Activated T-helper 1 cell treated with anti-CD3 and anti-CD28 coated beads, Interleukin-12 subunit alpha, Interleukin-12 subunit beta, Interleukin-2, Interleukin-4 antibody, amounts not matched to agents 30 ng/mL and 10 ng/mL and 1 ng/mL, durations not matched to agents 14 hours and 24 hours and 36 hours (primary cell): ENCODE measurements at regions of chr1 and their contacts with region 1.

Region 1: GRCh38 chr1:236603991-236604904 is at the start of gene HEATR1:
- DNase-seq: peak; percentile 85
- H3K4me3 Mint-ChIP-seq: peak within 1 kb of the TSS; percentile 98
- H3K27ac Mint-ChIP-seq: peak within 1 kb of the TSS; percentile 90
- H3K4me1 Mint-ChIP-seq: peaks cover 37% of the 10 kb centered on the region
- H3K27me3 Mint-ChIP-seq: peaks cover 8% of the 10 kb centered on the region
- total RNA-seq, gene HEATR1: 83.6 and 85.2 TPM in 2 replicates

Region 2: GRCh38 chr1:236103646-236104218 is 500.5 kb before region 1 on chr1:
- intact Hi-C with region 1: loop called (anchors 1 kb)
- DNase-seq: peak; percentile 38
- H3K4me3 Mint-ChIP-seq: no peak overlapping the region
- H3K27ac Mint-ChIP-seq: no peak overlapping the region
- H3K4me1 Mint-ChIP-seq: peaks cover 6% of the 10 kb centered on the region
- H3K27me3 Mint-ChIP-seq: peaks cover 3% of the 10 kb centered on the region

Region 3: DNA sequence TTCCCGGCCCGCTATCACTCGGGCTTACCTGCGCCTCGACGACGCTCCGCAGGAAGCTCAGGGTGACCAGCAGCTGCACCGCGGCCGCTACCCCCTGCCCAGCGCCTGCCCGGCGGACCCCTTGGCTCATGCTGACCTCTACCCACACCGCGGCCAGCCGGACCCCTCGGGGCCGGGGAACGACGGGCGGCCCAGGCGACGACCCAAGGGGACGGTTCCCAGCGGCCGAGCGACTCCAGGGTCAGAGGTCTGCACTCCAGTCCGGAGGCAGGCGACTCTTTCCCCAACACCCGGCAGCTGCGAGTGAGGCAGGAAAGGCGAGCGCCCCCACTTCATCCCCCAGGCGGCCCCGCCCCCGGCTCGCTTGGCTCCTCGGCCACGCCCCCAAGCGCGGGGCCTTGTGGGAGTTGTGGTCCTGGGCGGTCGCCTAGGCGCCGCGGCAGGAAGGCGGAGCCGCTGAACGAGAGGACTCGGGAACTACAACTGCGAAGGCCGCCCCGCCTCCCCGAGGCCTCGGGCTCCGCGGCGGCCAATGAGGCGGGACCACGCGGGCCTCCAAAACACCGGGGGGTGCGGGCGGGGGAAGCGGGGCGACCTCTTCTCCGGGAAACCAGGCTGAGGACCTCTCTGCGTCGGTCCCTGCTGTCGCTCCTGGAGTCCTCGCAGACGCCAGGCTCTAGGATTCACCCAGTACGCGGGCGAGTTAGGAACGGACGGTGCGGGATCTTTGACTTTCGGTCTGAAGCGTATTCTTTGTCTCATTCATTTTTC is 322.4 kb before region 1 on chr1 and contains the start of gene ERO1B:
- intact Hi-C with region 1: loop called (anchors 1 kb)
- DNase-seq: peak; percentile 98
- H3K4me3 Mint-ChIP-seq: peak within 1 kb of the TSS; percentile 90
- H3K27ac Mint-ChIP-seq: peak within 1 kb of the TSS; percentile 80
- H3K4me1 Mint-ChIP-seq: peaks cover 45% of the 10 kb centered on the region
- H3K27me3 Mint-ChIP-seq: peaks cover 12% of the 10 kb centered on the region
- total RNA-seq, gene ERO1B: 2.1 and 2.4 TPM in 2 replicates

Region 4: DNA sequence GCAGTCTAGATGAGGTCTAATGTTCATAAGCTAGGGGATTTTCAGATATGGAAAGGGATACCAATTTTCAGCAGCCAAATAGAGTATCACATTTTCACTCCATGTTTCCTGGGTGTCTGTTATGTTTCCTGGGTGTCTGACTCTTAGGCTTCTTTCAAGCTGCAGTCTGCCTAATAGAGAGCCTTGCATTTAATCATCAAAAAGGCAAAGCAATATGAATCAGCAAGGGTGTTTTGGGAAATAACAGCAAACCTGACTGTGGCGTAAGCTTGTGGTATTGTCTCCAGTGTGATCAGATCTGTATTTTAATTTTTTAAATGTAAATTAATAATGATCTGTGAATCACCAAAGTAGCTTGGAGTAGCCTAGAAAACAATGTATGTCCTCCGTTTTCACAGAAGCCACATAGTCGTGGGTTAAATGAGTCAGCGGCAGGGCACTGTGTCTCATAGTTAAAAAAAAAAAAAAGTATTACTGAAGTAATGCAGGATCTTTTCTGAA is 70.0 kb before region 1 on chr1:
- intact Hi-C with region 1: loop called (anchors 2 kb)
- DNase-seq: peak; percentile 24
- H3K4me3 Mint-ChIP-seq: peak overlapping the region; percentile 22
- H3K27ac Mint-ChIP-seq: peak overlapping the region; percentile 90
- H3K4me1 Mint-ChIP-seq: peaks cover 40% of the 10 kb centered on the region
- H3K27me3 Mint-ChIP-seq: no peaks in the 10 kb centered on the region

Region 5: GRCh38 chr1:236795035-236795756 is 190.9 kb after region 1 on chr1 and contains the start of gene MTR:
- intact Hi-C with region 1: loop called (anchors 1 kb)
- DNase-seq: peak; percentile 94
- H3K4me3 Mint-ChIP-seq: peak within 1 kb of the TSS; percentile 89
- H3K27ac Mint-ChIP-seq: peak within 1 kb of the TSS; percentile 96
- H3K4me1 Mint-ChIP-seq: peaks cover 37% of the 10 kb centered on the region
- H3K27me3 Mint-ChIP-seq: peaks cover 13% of the 10 kb centered on the region
- total RNA-seq, gene MTR: 48.9 and 49.2 TPM in 2 replicates

Region 6: GRCh38 chr1:237124856-237125462 is 520.7 kb after region 1 on chr1:
- intact Hi-C with region 1: loop called (anchors 10 kb)
- DNase-seq: no peak
- H3K4me3 Mint-ChIP-seq: no peak overlapping the region
- H3K27ac Mint-ChIP-seq: no peak overlapping the region
- H3K4me1 Mint-ChIP-seq: no peaks in the 10 kb centered on the region
- H3K27me3 Mint-ChIP-seq: no peaks in the 10 kb centered on the region

Region 7: DNA sequence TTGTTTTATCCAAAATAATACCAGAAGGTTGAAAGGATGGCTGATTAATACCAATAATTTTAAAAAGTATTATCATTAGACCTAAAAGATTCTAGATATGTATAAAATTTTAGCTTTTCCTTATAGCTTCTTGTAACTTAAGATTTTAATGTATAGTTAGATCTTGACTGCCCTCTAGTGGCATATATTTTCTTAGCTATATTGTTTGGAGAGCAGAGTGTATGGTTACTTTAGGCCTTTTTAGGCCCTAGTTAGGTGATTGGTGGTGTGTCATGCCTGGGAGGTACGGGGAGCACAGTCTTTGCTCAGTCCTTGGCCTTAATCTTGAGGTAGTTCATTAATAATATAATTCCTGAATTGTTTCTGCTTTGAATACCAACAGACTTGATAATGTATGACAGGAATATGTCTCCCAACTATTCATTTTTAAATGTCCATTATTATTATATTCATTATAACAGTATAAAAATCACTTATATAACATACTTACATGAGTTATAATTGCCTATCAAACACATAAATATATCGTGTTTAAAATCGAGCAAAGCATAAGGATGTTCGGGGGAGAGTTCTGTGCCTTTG is 958.1 kb after region 1 on chr1:
- intact Hi-C with region 1: loop called (anchors 2 kb)
- DNase-seq: no peak
- H3K4me3 Mint-ChIP-seq: no peak overlapping the region
- H3K27ac Mint-ChIP-seq: no peak overlapping the region
- H3K4me1 Mint-ChIP-seq: no peaks in the 10 kb centered on the region
- H3K27me3 Mint-ChIP-seq: no peaks in the 10 kb centered on the region

Region 8: GRCh38 chr1:238293075-238293474 is 1688.8 kb after region 1 on chr1:
- intact Hi-C with region 1: no loop called
- DNase-seq: no peak
- H3K4me3 Mint-ChIP-seq: no peak overlapping the region
- H3K27ac Mint-ChIP-seq: no peak overlapping the region
- H3K4me1 Mint-ChIP-seq: no peaks in the 10 kb centered on the region
- H3K27me3 Mint-ChIP-seq: no peaks in the 10 kb centered on the region